Natural killer cell (primary cell): ENCODE measurements at regions of chr1 and their contacts with region 1.

Region 1: GRCh38 chr1:160675641-160676410 is 29.0 kb upstream of the SLAMF1 start:
- DNase-seq: peak; percentile 60 to 86
- ATAC-seq: peak; percentile 89 to 99 (median 92)
- H3K4me3 ChIP-seq: no peak overlapping the region
- H3K4me3 Mint-ChIP-seq: no peak overlapping the region
- H3K27ac ChIP-seq: no peak overlapping the region
- H3K27ac Mint-ChIP-seq: peak overlapping the region; percentile 22 to 69
- H3K4me1 ChIP-seq: peaks cover 24% of the 10 kb centered on the region
- H3K4me1 Mint-ChIP-seq: peaks cover 16 to 27% of the 10 kb centered on the region in 2 donors
- H3K27me3 ChIP-seq: no peaks in the 10 kb centered on the region
- H3K27me3 Mint-ChIP-seq: no peaks in the 10 kb centered on the region
- CTCF ChIP-seq: peak; percentile 92

Region 2: GRCh38 chr1:160618763-160619274 is 57.0 kb before region 1 on chr1:
- intact Hi-C with region 1: loop called (anchors 2 kb)
- DNase-seq: peak in 1 of 2 donors; percentile 76
- ATAC-seq: peak; percentile 72 to 94 (median 82)
- H3K4me3 ChIP-seq: no peak overlapping the region
- H3K4me3 Mint-ChIP-seq: no peak overlapping the region
- H3K27ac ChIP-seq: no peak overlapping the region
- H3K27ac Mint-ChIP-seq: no peak overlapping the region
- H3K4me1 ChIP-seq: peaks cover 9% of the 10 kb centered on the region
- H3K4me1 Mint-ChIP-seq: peaks cover 8 to 16% of the 10 kb centered on the region in 2 donors
- H3K27me3 ChIP-seq: no peaks in the 10 kb centered on the region
- H3K27me3 Mint-ChIP-seq: peaks cover 2 to 5% of the 10 kb centered on the region in 2 donors
- CTCF ChIP-seq: peak; percentile 84